Activated naive CD4-positive, alpha-beta T cell treated with anti-CD3 and anti-CD28 coated beads for 36 hours (primary cell): ENCODE measurements at regions of chr17 and their contacts with region 1.

Region 1: GRCh38 chr17:5438716-5439445 is at the start of gene C1QBP:
- DNase-seq: peak; percentile 94
- H3K4me3 Mint-ChIP-seq: peak within 1 kb of the TSS; percentile 81
- H3K27ac Mint-ChIP-seq: peak within 1 kb of the TSS; percentile 88
- H3K4me1 Mint-ChIP-seq: peaks cover 41% of the 10 kb centered on the region
- H3K27me3 Mint-ChIP-seq: no peaks in the 10 kb centered on the region
- total RNA-seq, gene C1QBP: 435 to 460 TPM

Region 2: DNA sequence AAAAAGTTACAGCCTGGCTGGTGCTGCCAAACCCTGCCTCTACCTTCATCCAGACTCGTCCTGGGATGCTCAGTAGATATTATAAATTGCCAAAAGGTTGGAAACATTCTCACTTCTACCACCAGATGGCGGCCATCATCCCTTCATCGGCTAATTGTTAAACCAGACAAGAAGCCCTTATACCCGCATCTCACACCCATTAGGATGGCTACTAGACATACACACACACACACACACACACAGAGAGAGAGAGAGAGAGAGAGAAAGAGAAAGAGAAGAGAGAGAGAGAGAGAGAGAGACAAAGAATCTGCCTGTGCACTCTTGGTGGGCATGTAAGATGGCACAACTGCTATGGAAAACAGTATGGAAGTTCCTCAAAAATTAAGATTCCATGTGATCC is 189.3 kb before region 1 on chr17:
- CTCF ChIA-PET with region 1: interaction called, 5 read pairs
- intact Hi-C with region 1: loop called (anchors 1 kb)
- DNase-seq: peak; percentile 85
- H3K4me3 Mint-ChIP-seq: no peak overlapping the region
- H3K27ac Mint-ChIP-seq: no peak overlapping the region
- H3K4me1 Mint-ChIP-seq: peaks cover 8% of the 10 kb centered on the region
- H3K27me3 Mint-ChIP-seq: no peaks in the 10 kb centered on the region

Region 3: GRCh38 chr17:5281814-5282653 is 156.8 kb before region 1 on chr17 and contains the start of gene RABEP1:
- CTCF ChIA-PET with region 1: no interaction called
- intact Hi-C with region 1: loop called (anchors 1 kb)
- DNase-seq: peak; percentile 94
- H3K4me3 Mint-ChIP-seq: peak within 1 kb of the TSS; percentile 91
- H3K27ac Mint-ChIP-seq: peak within 1 kb of the TSS; percentile 88
- H3K4me1 Mint-ChIP-seq: peaks cover 38% of the 10 kb centered on the region
- H3K27me3 Mint-ChIP-seq: no peaks in the 10 kb centered on the region
- total RNA-seq, gene RABEP1: 57.9 to 59.3 TPM

Region 4: GRCh38 chr17:5297245-5297644 is 141.6 kb before region 1 on chr17:
- CTCF ChIA-PET with region 1: interaction called, 8 read pairs
- intact Hi-C with region 1: loop called (anchors 5 kb)
- DNase-seq: no peak
- H3K4me3 Mint-ChIP-seq: no peak overlapping the region
- H3K27ac Mint-ChIP-seq: no peak overlapping the region
- H3K4me1 Mint-ChIP-seq: peaks cover 38% of the 10 kb centered on the region
- H3K27me3 Mint-ChIP-seq: no peaks in the 10 kb centered on the region

Region 5: DNA sequence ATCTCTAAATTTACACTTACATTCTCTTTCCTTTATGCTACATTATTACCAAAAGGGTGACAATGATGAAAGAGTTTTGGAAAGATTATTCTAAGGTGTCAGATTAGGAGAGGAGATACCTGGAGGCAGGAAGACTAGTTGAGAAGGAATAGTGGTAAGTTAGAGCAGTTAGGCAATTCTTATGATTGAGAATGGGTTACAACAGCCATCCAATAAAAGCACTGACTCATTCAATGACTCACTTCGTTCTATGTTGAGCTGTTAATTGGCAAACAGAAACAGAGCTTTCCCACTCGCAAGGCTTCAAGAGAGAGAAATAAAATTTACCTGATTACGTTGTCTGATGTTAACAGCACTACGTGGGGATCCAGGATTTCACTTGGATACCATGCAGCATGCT is 25.2 kb before region 1 on chr17:
- CTCF ChIA-PET with region 1: interaction called, 12 read pairs
- intact Hi-C with region 1: no loop called
- DNase-seq: no peak
- H3K4me3 Mint-ChIP-seq: no peak overlapping the region
- H3K27ac Mint-ChIP-seq: peak overlapping the region; percentile 82
- H3K4me1 Mint-ChIP-seq: peaks cover 61% of the 10 kb centered on the region
- H3K27me3 Mint-ChIP-seq: no peaks in the 10 kb centered on the region

Region 6: DNA sequence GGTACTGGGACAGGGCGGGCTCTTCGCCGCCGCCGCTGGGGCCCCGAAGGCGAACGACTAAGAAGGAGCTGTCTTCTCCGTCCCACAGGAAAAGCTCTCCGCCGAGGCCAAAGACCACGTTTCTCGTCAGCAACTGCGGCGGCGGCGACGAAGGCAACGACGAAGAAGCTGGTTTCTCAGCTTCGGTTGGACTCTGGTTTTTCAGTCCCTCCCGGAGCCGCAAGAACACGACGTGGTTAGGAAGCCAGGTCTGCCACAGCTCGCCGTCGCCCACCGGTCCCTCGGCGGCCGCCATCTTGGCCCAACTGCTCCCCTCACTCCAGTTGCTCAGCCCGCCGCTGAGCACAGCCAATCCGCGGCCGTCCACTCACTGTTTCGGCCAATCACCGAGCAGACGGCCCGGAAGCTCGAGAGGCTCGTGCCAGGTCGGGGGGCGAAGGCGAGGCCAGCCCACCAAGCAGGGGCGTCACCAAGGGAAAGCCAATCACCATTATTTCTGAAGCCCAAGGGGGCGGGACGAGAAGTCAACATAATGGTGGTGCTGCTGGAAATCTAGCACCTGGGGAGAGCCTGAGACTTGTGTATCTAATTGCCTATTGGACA is 19.4 kb before region 1 on chr17 and contains the start of gene NUP88:
- CTCF ChIA-PET with region 1: interaction called, 12 read pairs
- intact Hi-C with region 1: loop called (anchors 1 kb)
- DNase-seq: peak; percentile 97
- H3K4me3 Mint-ChIP-seq: peak within 1 kb of the TSS; percentile 100
- H3K27ac Mint-ChIP-seq: peak within 1 kb of the TSS; percentile 100
- H3K4me1 Mint-ChIP-seq: peaks cover 50% of the 10 kb centered on the region
- H3K27me3 Mint-ChIP-seq: no peaks in the 10 kb centered on the region
- total RNA-seq, gene NUP88: 115 to 131 TPM

Region 7: GRCh38 chr17:5468075-5468473 is 29.2 kb after region 1 on chr17:
- CTCF ChIA-PET with region 1: interaction called, 5 read pairs
- intact Hi-C with region 1: loop called (anchors 2 kb)
- DNase-seq: peak; percentile 22
- H3K4me3 Mint-ChIP-seq: peak overlapping the region; percentile 80
- H3K27ac Mint-ChIP-seq: peak overlapping the region; percentile 0
- H3K4me1 Mint-ChIP-seq: peaks cover 37% of the 10 kb centered on the region
- H3K27me3 Mint-ChIP-seq: no peaks in the 10 kb centered on the region

Region 8: GRCh38 chr17:5508810-5509209 is 69.9 kb after region 1 on chr17:
- CTCF ChIA-PET with region 1: no interaction called
- intact Hi-C with region 1: no loop called
- DNase-seq: no peak
- H3K4me3 Mint-ChIP-seq: no peak overlapping the region
- H3K27ac Mint-ChIP-seq: no peak overlapping the region
- H3K4me1 Mint-ChIP-seq: peaks cover 15% of the 10 kb centered on the region
- H3K27me3 Mint-ChIP-seq: no peaks in the 10 kb centered on the region

Region 9: GRCh38 chr17:5730373-5730772 is 291.5 kb after region 1 on chr17:
- CTCF ChIA-PET with region 1: no interaction called
- intact Hi-C with region 1: no loop called
- DNase-seq: no peak
- H3K4me3 Mint-ChIP-seq: no peak overlapping the region
- H3K27ac Mint-ChIP-seq: no peak overlapping the region
- H3K4me1 Mint-ChIP-seq: no peaks in the 10 kb centered on the region
- H3K27me3 Mint-ChIP-seq: peaks cover 7% of the 10 kb centered on the region

Region 10: GRCh38 chr17:6555331-6556120 is 1116.6 kb after region 1 on chr17:
- CTCF ChIA-PET with region 1: no interaction called
- intact Hi-C with region 1: no loop called
- DNase-seq: peak; percentile 20
- H3K4me3 Mint-ChIP-seq: peak overlapping the region; percentile 46
- H3K27ac Mint-ChIP-seq: no peak overlapping the region
- H3K4me1 Mint-ChIP-seq: peaks cover 10% of the 10 kb centered on the region
- H3K27me3 Mint-ChIP-seq: peaks cover 36% of the 10 kb centered on the region